Astrocyte of the cerebellum (primary cell): ENCODE measurements at regions of chr16 and their contacts with region 1.

Region 1: GRCh38 chr16:25155553-25156460 is 44.3 kb downstream of the LCMT1 start:
- DNase-seq: no peak
- H3K4me3 ChIP-seq: no peak overlapping the region
- CTCF ChIP-seq: no peak

Region 2: DNA sequence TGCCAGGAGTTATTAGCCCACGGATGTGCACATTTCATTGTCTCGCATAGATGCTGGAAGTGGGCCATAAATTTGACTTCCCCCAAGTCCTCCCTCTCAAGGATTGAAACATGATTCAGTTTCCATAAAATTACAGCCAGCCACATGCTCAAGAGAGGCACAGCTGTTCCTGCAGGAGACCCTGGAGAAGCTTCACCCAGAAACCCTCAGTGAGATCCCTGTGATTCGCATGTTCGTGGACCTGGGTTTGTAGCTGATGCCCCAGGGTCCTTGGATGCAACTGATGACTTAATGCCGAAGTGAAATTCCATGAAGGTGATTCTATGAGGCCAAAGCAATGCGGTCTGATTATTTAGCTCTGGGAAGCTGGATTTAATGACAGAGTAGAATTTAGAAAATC is 36.3 kb after region 1 on chr16:
- in situ Hi-C with region 1: loop called (anchors 5 kb)
- DNase-seq: no peak
- H3K4me3 ChIP-seq: no peak overlapping the region
- CTCF ChIP-seq: no peak

Region 3: DNA sequence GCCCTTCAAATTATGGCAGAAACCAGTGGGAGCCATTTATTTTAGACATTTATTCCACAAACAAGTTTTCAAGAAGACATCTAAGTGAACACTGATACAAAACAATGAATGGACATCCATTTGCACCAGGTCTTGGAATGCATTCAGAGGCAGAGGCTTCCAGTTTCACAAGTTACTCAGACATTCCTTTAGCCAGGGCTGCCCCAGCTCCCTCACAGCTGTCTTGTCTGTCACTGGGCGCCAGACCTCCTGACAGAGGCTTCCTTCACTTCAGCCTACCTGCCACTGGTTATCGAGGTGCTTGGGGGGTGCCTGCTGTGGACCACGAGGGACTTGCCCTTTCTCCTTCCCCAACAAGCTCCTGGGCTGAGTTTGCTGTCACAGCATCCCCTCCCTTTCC is 80.2 kb after region 1 on chr16:
- in situ Hi-C with region 1: no loop called
- DNase-seq: no peak
- H3K4me3 ChIP-seq: no peak overlapping the region
- CTCF ChIP-seq: no peak

Region 4: GRCh38 chr16:25413985-25414384 is 258.2 kb after region 1 on chr16:
- in situ Hi-C with region 1: no loop called
- DNase-seq: no peak
- H3K4me3 ChIP-seq: no peak overlapping the region
- CTCF ChIP-seq: no peak